WTC11 (cell line): ENCODE measurements at regions of chr4 and their contacts with region 1.

Region 1: DNA sequence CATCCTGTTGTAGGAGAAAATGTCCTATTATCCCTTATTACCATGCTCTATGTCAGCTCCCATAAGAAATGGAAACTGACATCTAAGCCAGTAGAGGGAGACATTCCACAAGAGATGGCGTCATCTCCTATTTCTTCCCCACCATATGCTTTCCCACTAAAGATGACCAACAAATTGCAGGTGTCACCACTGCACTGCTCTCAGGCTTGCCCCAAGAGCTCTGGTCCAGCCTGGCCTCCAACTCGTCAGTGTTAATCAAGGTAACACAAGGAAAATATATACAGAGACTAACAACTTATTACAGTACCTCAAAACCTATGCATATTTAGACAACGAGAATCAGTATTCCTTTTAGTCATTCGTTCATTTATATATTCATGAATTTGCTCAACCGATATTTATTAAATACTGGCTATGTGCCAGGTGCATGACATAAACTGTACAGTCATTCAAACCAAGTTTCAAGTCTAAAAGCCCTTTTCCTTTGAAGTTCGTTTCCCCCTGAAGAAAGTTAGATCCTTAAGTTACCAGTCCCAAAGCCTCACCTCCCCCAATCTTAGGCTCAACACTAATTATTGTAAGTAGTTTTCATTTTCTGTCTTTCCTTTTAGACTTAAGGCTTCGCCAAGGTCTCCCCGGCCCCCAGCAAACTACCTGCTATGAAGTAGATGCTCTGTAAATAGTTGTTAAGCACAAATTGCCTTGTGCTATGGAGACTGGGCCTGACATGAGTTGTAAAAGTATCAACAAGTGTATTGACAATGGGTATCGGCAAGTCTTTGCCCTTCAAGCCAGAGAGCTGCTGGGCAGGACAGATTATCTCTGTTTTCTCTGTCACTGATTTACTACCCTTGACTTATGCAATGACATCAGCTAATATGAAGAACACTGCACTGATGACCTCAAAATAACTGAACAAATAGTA is 3.1 kb upstream of the FGB start:
- DNase-seq: peak; percentile 17
- ATAC-seq: peak; percentile 98
- H3K4me3 Mint-ChIP-seq: no peak overlapping the region
- H3K27ac Mint-ChIP-seq: no peak overlapping the region
- H3K4me1 Mint-ChIP-seq: no peaks in the 10 kb centered on the region
- H3K27me3 Mint-ChIP-seq: no peaks in the 10 kb centered on the region
- CTCF ChIP-seq: no peak

Region 2: GRCh38 chr4:154452798-154453346 is 106.9 kb before region 1 on chr4:
- CTCF ChIA-PET with region 1: no interaction called
- POLR2A ChIA-PET with region 1: no interaction called
- DNase-seq: no peak
- ATAC-seq: no peak
- H3K4me3 Mint-ChIP-seq: no peak overlapping the region
- H3K27ac Mint-ChIP-seq: no peak overlapping the region
- H3K4me1 Mint-ChIP-seq: peaks cover 6% of the 10 kb centered on the region; the same call in 1 of the 2 replicates
- H3K27me3 Mint-ChIP-seq: no peaks in the 10 kb centered on the region
- CTCF ChIP-seq: no peak

Region 3: DNA sequence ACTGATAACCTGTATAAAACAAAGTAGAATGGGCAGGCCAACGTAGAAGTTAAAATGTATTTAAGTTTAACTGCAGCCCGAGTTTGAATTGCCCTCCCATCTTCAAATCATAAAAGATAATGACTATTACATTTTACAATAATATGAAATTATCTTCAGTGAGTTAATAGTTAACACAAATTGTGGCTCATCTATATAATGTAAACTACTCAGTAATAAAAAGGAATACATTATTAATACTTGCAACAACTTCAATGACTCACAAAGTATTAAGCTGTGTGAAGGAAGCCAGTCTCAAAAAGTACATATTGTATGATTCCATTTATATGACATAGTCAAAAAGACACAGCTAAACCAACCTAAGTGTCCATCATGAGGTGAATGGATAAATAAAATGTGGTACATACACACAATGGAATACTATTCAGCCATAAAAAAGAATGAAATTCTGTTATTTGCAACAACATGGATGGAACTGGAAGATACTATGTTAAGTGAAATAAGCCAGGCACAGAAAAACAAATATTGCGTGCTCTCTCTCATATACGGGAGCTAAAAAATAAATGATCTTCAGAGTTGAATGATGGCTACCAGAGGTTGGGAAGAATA is 17.4 kb before region 1 on chr4:
- CTCF ChIA-PET with region 1: no interaction called
- POLR2A ChIA-PET with region 1: no interaction called
- DNase-seq: no peak
- ATAC-seq: no peak
- H3K4me3 Mint-ChIP-seq: no peak overlapping the region
- H3K27ac Mint-ChIP-seq: no peak overlapping the region
- H3K4me1 Mint-ChIP-seq: no peaks in the 10 kb centered on the region
- H3K27me3 Mint-ChIP-seq: no peaks in the 10 kb centered on the region
- CTCF ChIP-seq: no peak

Region 4: DNA sequence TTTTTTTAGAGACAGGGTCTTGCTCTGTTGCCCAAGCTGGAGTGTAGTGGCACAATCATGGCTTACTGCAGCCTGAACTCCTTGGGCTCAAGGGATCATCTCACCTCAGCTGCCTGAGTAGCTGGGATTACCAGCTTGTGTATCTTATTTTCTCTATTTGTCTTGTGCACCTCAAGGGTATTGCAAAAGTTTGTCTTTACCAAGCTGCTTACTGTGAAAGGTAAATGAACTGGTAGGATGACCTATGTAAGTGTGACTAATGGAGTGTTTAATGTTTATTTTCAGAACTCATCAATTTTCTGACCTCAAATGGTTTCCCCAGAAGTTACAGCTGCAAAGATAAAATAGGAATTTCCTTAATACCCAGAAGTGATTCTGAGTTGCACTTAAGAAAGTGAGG is 36.1 kb after region 1 on chr4:
- CTCF ChIA-PET with region 1: interaction called, 10 read pairs
- POLR2A ChIA-PET with region 1: no interaction called
- DNase-seq: no peak
- ATAC-seq: no peak
- H3K4me3 Mint-ChIP-seq: no peak overlapping the region
- H3K27ac Mint-ChIP-seq: no peak overlapping the region
- H3K4me1 Mint-ChIP-seq: no peaks in the 10 kb centered on the region; the same call in 1 of the 2 replicates
- H3K27me3 Mint-ChIP-seq: no peaks in the 10 kb centered on the region
- CTCF ChIP-seq: no peak

Region 5: DNA sequence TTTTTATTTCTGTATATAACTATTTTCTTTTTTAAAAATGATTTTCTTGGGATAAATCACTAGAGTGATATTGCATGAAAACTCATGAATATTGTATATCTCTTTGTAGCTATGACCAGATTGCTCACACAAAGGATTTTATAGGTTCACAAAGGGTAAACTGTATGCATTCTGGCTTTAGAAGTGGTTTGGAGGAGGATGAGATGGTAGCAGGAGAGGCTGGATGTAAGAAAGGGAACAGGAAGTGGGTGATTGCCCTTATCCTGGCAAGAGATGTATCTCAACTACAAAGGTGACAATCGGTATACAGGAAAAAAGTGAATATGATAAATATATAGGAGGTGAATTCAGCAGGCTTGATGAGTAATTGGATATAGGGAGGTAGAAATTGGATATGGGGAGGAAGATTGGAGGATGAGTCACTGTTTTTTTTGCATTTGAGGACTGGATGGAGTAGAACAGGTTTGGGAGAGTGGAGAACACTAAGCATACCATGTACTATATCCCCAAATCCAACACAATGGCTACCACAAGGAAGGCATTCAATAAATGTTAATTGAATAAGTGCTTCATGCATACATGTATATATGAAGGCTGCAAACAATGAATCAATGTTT is 42.8 kb after region 1 on chr4:
- CTCF ChIA-PET with region 1: interaction called, 14 read pairs
- POLR2A ChIA-PET with region 1: no interaction called
- DNase-seq: no peak
- ATAC-seq: no peak
- H3K4me3 Mint-ChIP-seq: no peak overlapping the region
- H3K27ac Mint-ChIP-seq: no peak overlapping the region
- H3K4me1 Mint-ChIP-seq: peaks cover 16% of the 10 kb centered on the region
- H3K27me3 Mint-ChIP-seq: no peaks in the 10 kb centered on the region
- CTCF ChIP-seq: no peak

Region 6: DNA sequence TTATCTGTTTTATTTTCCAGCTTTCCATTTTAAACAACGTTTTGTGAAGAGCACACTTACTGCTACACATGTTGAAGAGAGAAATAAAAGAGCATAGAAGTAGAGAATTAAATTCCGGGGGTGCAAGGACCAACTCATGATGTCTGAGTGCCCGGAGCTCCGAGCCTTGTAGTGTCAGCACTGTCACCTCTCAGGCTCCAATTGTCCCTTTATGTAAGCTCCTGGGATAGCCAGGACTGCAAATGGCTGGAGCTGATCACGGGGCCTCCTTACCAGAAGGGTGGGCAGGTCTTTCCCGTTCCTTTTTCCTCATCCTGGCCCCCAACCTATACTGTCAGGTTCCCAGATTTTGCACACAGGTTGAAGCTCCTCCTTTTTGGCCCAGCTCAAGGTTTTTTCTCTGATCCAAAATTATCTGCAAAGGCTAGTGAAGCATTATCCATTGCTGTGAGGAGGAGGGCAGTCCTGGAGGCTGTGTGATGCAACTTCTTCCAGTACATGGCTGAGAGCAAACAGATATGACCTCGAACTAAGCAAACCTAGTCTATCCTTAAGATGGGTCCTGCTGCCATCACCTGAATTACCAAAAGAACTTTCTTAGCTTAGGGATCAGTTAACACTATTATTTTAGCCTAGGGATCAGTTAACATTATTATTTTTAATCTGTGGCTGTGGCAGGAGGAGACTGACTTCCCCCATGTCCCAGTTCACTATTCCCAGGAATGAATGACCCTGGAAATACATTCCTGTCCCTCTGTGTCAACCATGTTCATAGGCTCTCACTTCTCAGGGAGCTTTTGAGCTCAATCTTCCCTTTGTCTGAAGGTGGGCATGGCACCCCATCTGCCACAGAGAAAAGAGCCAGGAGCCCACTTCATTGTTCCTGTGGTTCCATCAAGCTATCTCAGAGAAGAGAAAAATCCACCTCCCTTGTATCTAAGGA is 53.0 kb after region 1 on chr4 and contains the start of gene FGG:
- CTCF ChIA-PET with region 1: interaction called, 145 read pairs
- POLR2A ChIA-PET with region 1: no interaction called
- DNase-seq: no peak
- ATAC-seq: no peak; the same call in 1 of the 2 replicates
- H3K4me3 Mint-ChIP-seq: no peak within 1 kb of the TSS
- H3K27ac Mint-ChIP-seq: no peak within 1 kb of the TSS
- H3K4me1 Mint-ChIP-seq: peaks cover 4% of the 10 kb centered on the region
- H3K27me3 Mint-ChIP-seq: no peaks in the 10 kb centered on the region; the same call in 1 of the 2 replicates
- CTCF ChIP-seq: no peak
- total RNA-seq, gene FGG: 2.3 to 3.0 TPM (median 2.4 TPM) in 3 replicates

Region 7: DNA sequence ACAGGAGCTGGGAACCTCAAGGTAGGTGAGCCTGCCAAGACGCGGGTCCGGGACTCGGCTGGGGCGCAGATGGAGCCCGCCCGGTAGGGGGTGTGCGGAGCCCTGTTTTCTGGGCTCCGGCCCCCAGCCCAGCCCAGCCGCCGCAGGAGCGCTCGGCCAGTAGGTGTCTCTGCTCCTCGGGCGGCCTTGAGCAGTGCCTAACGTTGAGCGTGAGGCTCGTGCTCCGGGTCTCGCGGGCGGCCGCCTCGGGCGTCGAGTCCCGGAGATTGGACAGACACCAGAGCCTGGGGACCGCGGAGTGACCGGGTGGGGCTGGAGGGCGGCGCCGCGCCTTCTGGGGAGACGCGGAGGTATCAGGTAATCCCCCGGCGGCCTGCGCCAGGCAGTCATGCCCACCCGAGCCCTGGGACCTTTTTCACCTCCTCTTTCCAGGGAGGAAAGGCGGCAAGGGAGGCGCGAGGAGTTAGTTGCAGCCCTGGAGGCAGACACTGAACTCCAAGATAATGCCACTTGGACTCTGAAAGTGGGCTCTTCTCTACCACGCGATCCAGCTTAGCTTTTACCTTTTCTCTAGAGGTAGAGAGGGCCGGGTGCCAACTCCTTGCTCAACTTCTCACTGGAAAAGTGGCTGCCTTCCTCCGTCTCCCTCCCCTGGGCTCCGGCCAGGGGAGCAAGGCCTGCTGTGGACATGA is 67.2 kb after region 1 on chr4:
- CTCF ChIA-PET with region 1: interaction called, 104 read pairs
- POLR2A ChIA-PET with region 1: no interaction called
- DNase-seq: peak; percentile 84
- ATAC-seq: peak; percentile 94
- H3K4me3 Mint-ChIP-seq: no peak overlapping the region
- H3K27ac Mint-ChIP-seq: no peak overlapping the region
- H3K4me1 Mint-ChIP-seq: peaks cover 6% of the 10 kb centered on the region
- H3K27me3 Mint-ChIP-seq: peaks cover 10% of the 10 kb centered on the region
- CTCF ChIP-seq: peak; percentile 41; the same call in 1 of the 2 replicates